PC-9 (cell line): ENCODE measurements at regions of chr1 and their contacts with region 1.

Region 1: GRCh38 chr1:208631092-208631491 is 386.9 kb upstream of the PLXNA2 start:
- DNase-seq: no peak
- H3K4me3 ChIP-seq: no peak overlapping the region
- H3K27ac ChIP-seq: no peak overlapping the region
- H3K4me1 ChIP-seq: no peaks in the 10 kb centered on the region
- H3K27me3 ChIP-seq: peaks cover 21% of the 10 kb centered on the region
- CTCF ChIP-seq: no peak

Region 2: GRCh38 chr1:208577381-208577905 is 53.6 kb before region 1 on chr1:
- CTCF ChIA-PET with region 1: no interaction called
- POLR2A ChIA-PET with region 1: no interaction called
- intact Hi-C with region 1: loop called (anchors 10 kb)
- DNase-seq: no peak
- H3K4me3 ChIP-seq: no peak overlapping the region
- H3K27ac ChIP-seq: no peak overlapping the region
- H3K4me1 ChIP-seq: no peaks in the 10 kb centered on the region
- H3K27me3 ChIP-seq: peaks cover 67% of the 10 kb centered on the region
- CTCF ChIP-seq: no peak